Mucosa of descending colon (tissue), 3 donors: ENCODE measurements at regions of chr7 and their contacts with region 1.

Region 1: GRCh38 chr7:101602484-101603241 is 26.4 kb downstream of the MYL10 start:
- DNase-seq: peak; percentile 74 to 85 (median 82)
- ATAC-seq: peak; percentile 85
- H3K4me3 ChIP-seq: no peak overlapping the region
- H3K4me1 ChIP-seq: peaks cover 11% of the 10 kb centered on the region
- CTCF ChIP-seq: peak; percentile 82

Region 2: GRCh38 chr7:101299511-101300464 is 302.9 kb before region 1 on chr7:
- intact Hi-C with region 1: no loop called
- DNase-seq: peak in 1 of 3 donors; percentile 39
- ATAC-seq: no peak
- H3K4me3 ChIP-seq: no peak overlapping the region
- H3K4me1 ChIP-seq: no peaks in the 10 kb centered on the region
- CTCF ChIP-seq: no peak

Region 3: DNA sequence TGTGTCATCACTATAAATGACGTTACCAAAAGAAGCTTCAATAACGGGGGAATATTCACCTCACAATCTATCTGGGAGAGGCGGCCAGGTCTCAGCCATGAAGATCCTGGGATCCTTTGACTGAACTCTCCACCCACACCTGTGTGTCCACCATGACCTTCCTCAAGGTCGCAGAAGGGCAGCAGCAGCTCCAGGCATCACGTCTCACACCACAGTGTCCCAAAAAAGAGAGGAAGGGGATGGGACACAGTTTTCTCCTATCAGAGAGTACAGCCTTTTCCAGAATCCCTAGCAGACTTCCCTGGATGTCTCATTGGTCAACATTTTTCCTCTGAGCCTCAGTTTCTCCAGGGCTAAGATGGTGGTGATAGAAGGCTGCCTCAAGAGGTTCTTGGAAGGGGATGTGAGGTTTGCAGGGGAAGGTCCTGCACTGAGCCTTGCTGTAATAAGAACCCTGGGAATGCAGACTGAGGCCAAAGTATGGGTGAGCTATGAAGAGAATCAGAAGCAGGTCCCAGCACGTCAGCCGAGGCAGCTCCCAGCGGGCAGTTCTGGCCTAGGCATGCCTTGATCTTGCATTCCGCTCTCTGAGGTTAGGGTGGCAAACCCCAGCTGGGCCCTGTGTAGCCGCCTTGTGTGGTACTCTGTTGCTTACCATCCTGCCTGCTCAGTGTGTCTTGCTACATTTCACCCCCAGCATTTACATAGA is 176.2 kb before region 1 on chr7:
- intact Hi-C with region 1: no loop called
- DNase-seq: no peak
- ATAC-seq: no peak
- H3K4me3 ChIP-seq: no peak overlapping the region
- H3K4me1 ChIP-seq: no peaks in the 10 kb centered on the region
- CTCF ChIP-seq: no peak

Region 4: DNA sequence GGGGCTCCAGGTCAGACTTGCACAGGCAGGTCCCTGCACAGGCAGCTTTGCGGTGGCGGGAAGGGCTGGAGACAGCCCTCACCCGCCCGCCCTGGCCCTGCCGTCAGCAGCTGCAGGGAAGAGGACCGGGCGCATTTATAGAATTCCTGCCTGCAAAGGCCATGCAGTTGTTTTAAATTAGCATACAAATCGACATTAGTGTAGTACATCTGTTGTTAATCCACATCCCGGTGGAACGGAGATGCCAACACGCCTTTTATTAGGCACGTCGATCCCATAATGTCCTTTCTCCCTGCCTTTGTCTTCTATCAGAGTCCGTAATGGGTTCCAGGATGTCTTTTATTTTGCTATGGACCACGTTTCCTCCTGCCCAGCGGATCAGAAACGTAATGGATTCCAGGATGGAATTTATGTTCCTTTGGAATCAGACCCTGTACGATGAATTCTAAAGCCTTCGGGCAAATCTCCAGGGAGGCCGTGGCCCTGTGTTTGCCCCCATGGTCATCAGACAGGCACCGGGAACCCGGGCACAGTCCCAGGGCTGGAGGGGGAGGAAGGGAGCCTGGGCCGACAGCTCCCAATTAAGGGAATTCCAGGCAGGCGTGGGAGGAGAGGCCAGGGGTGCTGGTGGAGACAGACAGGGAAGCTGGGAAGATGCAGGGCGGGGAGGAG is 116.1 kb before region 1 on chr7:
- intact Hi-C with region 1: no loop called
- DNase-seq: peak in 1 of 3 donors; percentile 41
- ATAC-seq: no peak
- H3K4me3 ChIP-seq: no peak overlapping the region
- H3K4me1 ChIP-seq: no peaks in the 10 kb centered on the region
- CTCF ChIP-seq: no peak

Region 5: DNA sequence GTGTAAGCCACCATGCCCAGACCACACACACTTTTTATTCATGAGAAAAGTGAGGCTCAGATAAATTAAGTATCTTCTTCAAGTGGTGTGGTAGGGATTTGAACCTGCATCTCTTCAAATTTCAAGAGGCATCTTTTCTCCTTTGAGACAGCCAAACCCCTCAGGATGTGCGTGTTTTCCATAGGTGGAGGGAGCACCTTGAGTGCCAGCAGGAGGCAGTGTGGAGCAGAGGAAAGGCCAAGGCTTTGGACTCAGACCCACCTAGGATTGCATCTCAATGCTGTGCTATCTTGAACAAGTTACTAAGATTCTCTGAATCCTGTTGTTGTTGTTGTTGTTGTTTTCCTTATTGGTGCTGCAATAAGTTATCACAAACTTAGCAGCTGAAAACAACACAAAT is 66.6 kb after region 1 on chr7:
- intact Hi-C with region 1: loop called in 1 of 2 experiments (anchors 10 kb)
- DNase-seq: peak in 2 of 3 donors; percentile 42 to 46
- ATAC-seq: peak; percentile 39
- H3K4me3 ChIP-seq: no peak overlapping the region
- H3K4me1 ChIP-seq: no peaks in the 10 kb centered on the region
- CTCF ChIP-seq: no peak

Region 6: DNA sequence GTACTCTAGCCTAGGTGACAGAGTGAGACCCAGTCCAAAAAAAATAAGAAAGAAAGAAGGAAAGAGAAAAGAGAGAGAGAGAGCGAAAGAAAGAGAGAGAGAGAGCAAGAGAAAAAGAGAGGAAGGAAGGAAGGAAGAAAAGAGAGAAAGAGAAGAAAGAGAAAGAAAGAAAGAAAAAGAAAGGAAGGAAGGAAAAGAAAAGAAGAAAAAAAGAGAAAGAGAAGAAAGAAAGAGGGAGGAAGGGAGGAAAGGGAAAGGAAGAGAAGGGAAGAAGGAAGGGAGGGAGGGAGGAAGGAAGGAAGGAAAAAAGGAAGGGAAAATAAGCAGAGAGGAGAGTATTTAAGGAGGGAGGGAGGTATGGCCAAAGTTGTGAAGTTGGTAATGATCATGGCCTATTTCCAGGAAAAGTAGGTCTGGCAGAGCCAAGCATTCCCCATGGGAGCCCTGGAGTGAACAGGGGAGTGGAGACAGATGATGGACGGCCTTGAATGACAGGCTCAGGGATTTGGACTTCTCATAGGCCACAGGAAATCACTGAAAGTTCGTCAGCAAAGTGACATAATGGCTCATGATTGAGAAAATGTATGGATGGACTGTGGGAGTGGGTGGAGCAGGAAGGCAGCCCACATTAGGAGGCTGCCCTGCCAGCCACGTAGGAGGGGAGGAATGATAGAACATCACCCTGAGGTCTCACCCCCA is 170.0 kb after region 1 on chr7:
- intact Hi-C with region 1: no loop called
- DNase-seq: no peak
- ATAC-seq: no peak
- H3K4me3 ChIP-seq: no peak overlapping the region
- H3K4me1 ChIP-seq: no peaks in the 10 kb centered on the region
- CTCF ChIP-seq: no peak

Region 7: GRCh38 chr7:102272075-102272917 is 669.6 kb after region 1 on chr7:
- intact Hi-C with region 1: loop called in 1 of 2 experiments (anchors 5 kb)
- DNase-seq: peak; percentile 76 to 90 (median 87)
- ATAC-seq: peak; percentile 79
- H3K4me3 ChIP-seq: no peak overlapping the region
- H3K4me1 ChIP-seq: peaks cover 14% of the 10 kb centered on the region
- CTCF ChIP-seq: peak; percentile 86